Caco-2 (cell line): ENCODE measurements at regions of chr5 and their contacts with region 1.

Region 1: DNA sequence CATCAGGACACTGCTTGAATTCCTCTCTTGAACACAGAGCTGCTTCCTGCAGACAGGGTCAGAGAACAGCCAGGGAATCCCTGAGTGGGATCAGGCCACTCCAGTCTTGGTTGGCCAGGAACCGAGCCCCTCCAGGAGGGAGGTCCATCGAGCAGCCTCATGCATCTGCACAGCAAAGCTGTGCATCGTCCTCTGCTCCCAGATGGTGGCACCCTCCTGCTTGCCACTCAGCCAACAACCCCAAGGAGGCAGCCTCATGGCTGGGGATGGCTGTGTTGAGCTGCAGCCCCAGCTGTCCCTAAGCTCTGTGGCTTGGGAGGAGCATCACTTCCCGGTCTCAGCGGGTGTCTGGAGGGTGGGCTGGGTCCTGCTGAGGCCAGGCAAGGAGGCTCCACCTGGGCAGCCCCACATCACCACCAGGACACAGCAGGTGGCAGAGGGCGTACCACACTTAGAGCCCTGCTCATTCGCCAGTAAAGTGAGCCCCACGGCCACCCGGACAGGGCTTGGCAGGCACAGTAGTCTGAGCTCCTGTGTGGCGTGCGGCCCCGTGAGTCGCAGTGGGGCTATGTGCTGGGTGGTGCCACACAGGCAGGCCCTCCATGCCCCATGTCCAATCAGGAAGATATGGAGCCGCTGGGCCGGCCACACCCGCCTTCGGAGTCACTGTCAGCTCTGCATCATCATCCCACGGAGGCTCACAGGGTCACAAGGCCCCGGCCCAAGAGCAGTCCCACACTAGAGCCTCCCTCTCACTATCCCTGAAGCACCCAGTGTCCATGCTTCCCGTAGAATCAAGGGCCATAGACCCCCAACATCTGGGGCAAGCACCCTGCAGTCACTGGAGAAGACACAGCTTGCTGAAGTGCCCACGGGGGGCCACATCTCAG is 11.9 kb downstream of the LPCAT1 start:
- DNase-seq: peak; percentile 35 to 36
- H3K4me3 ChIP-seq: no peak overlapping the region
- H3K4me3 Mint-ChIP-seq: no peak overlapping the region
- H3K27ac Mint-ChIP-seq: peak overlapping the region; percentile 45
- H3K4me1 ChIP-seq: peaks cover 26% of the 10 kb centered on the region
- H3K4me1 Mint-ChIP-seq: peaks cover 13% of the 10 kb centered on the region
- H3K27me3 ChIP-seq: no peaks in the 10 kb centered on the region
- H3K27me3 Mint-ChIP-seq: no peaks in the 10 kb centered on the region
- CTCF ChIP-seq: peak in 1 of 2 experiments; percentile 42

Region 2: GRCh38 chr5:1204693-1205242 is 307.1 kb before region 1 on chr5:
- CTCF ChIA-PET with region 1: no interaction called
- POLR2A ChIA-PET with region 1: no interaction called
- intact Hi-C with region 1: no loop called
- DNase-seq: peak; percentile 68 to 72
- H3K4me3 ChIP-seq: no peak overlapping the region
- H3K4me3 Mint-ChIP-seq: no peak overlapping the region
- H3K27ac Mint-ChIP-seq: no peak overlapping the region
- H3K4me1 ChIP-seq: peaks cover 44% of the 10 kb centered on the region
- H3K4me1 Mint-ChIP-seq: no peaks in the 10 kb centered on the region
- H3K27me3 ChIP-seq: no peaks in the 10 kb centered on the region
- H3K27me3 Mint-ChIP-seq: no peaks in the 10 kb centered on the region
- CTCF ChIP-seq: peak; percentile 55 to 84

Region 3: DNA sequence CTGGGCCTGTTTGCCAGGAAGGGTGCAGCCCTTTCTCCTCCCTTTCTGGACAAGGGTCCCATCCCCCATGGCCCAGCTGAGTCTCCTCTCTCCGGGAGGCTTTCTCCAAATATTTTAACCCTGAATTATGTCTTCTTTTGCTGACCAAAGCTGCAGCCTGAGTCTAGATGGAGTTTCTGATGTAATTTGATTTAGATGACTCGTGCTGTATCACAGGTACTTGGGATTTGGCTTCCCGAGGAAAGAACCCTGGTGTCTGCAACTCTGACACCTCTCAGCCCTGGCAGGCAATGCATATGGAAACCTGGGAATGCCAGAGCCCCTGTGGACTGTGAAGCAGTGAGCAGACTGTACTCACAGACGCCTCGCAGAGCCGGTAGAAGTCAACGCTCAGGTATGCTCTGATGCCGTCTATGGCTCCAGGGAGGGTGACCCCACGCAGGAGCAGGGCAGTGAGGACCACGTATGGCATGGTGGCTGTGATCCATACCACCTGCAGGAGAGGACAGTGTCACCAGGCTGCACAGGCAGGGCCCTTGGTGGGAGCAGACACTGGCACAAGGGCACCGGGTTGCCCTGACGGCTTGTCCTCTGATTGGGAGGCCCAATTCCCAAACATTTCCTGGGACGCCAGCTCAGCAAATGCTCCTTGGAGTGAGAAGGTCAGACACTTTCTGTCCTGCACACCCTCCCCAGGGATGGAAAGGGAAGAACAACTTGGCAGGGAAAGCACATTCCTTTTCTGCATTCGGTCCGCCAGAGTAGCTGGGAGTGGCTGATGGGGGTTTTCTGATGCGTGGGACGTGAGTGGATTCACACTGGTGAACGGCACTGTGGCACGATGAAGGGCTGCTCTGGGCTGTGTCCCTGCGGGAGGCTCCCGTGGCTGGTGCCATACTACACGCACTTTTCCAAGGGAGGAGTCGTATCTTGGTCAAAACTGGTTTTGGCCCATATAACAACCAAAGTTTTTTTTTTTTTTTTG is 91.4 kb before region 1 on chr5:
- CTCF ChIA-PET with region 1: no interaction called
- POLR2A ChIA-PET with region 1: no interaction called
- intact Hi-C with region 1: no loop called
- DNase-seq: no peak
- H3K4me3 ChIP-seq: no peak overlapping the region
- H3K4me3 Mint-ChIP-seq: no peak overlapping the region
- H3K27ac Mint-ChIP-seq: no peak overlapping the region
- H3K4me1 ChIP-seq: no peaks in the 10 kb centered on the region
- H3K4me1 Mint-ChIP-seq: no peaks in the 10 kb centered on the region
- H3K27me3 ChIP-seq: no peaks in the 10 kb centered on the region
- H3K27me3 Mint-ChIP-seq: peaks cover 22% of the 10 kb centered on the region
- CTCF ChIP-seq: no peak

Region 4: GRCh38 chr5:1523771-1524480 is 12.0 kb after region 1 on chr5 and contains the start of gene LPCAT1:
- CTCF ChIA-PET with region 1: no interaction called
- POLR2A ChIA-PET with region 1: no interaction called
- intact Hi-C with region 1: loop called (anchors 1 kb)
- DNase-seq: peak; percentile 60 to 87
- H3K4me3 ChIP-seq: peak within 1 kb of the TSS; percentile 80
- H3K4me3 Mint-ChIP-seq: peak within 1 kb of the TSS; percentile 76
- H3K27ac Mint-ChIP-seq: no peak within 1 kb of the TSS
- H3K4me1 ChIP-seq: peaks cover 5% of the 10 kb centered on the region
- H3K4me1 Mint-ChIP-seq: peaks cover 7% of the 10 kb centered on the region
- H3K27me3 ChIP-seq: no peaks in the 10 kb centered on the region
- H3K27me3 Mint-ChIP-seq: no peaks in the 10 kb centered on the region
- CTCF ChIP-seq: no peak
- total RNA-seq, gene LPCAT1: 49.3 and 52.8 TPM in 2 replicates

Region 5: GRCh38 chr5:1641560-1642166 is 129.8 kb after region 1 on chr5:
- CTCF ChIA-PET with region 1: interaction called, 3 read pairs
- POLR2A ChIA-PET with region 1: no interaction called
- intact Hi-C with region 1: loop called (anchors 5 kb)
- DNase-seq: peak; percentile 76 to 82
- H3K4me3 ChIP-seq: no peak overlapping the region
- H3K4me3 Mint-ChIP-seq: no peak overlapping the region
- H3K27ac Mint-ChIP-seq: no peak overlapping the region
- H3K4me1 ChIP-seq: no peaks in the 10 kb centered on the region
- H3K4me1 Mint-ChIP-seq: peaks cover 5% of the 10 kb centered on the region
- H3K27me3 ChIP-seq: peaks cover 2% of the 10 kb centered on the region; the same call in 1 of the 2 replicates
- H3K27me3 Mint-ChIP-seq: peaks cover 7% of the 10 kb centered on the region
- CTCF ChIP-seq: peak; percentile 86 to 98